A673 (cell line): ENCODE measurements at regions of chr3 and their contacts with region 1.

Region 1: GRCh38 chr3:115814778-115815380 is 191.6 kb downstream of the GAP43 start:
- DNase-seq: peak; percentile 88
- H3K4me3 ChIP-seq: no peak overlapping the region
- H3K27ac ChIP-seq: no peak overlapping the region
- H3K4me1 ChIP-seq: no peaks in the 10 kb centered on the region
- H3K27me3 ChIP-seq: no peaks in the 10 kb centered on the region
- CTCF ChIP-seq: peak; percentile 90

Region 2: GRCh38 chr3:115040673-115041286 is 774.1 kb before region 1 on chr3:
- CTCF ChIA-PET with region 1: no interaction called
- POLR2A ChIA-PET with region 1: no interaction called
- intact Hi-C with region 1: loop called (anchors 2 kb)
- DNase-seq: peak; percentile 62
- H3K4me3 ChIP-seq: no peak overlapping the region
- H3K27ac ChIP-seq: no peak overlapping the region
- H3K4me1 ChIP-seq: no peaks in the 10 kb centered on the region
- H3K27me3 ChIP-seq: no peaks in the 10 kb centered on the region
- CTCF ChIP-seq: peak; percentile 82

Region 3: GRCh38 chr3:115092220-115092791 is 722.6 kb before region 1 on chr3:
- CTCF ChIA-PET with region 1: interaction called, 3 read pairs
- POLR2A ChIA-PET with region 1: no interaction called
- intact Hi-C with region 1: loop called (anchors 1 kb)
- DNase-seq: peak; percentile 76
- H3K4me3 ChIP-seq: no peak overlapping the region
- H3K27ac ChIP-seq: no peak overlapping the region
- H3K4me1 ChIP-seq: no peaks in the 10 kb centered on the region
- H3K27me3 ChIP-seq: no peaks in the 10 kb centered on the region
- CTCF ChIP-seq: peak; percentile 77